Heart left ventricle (tissue), 16 donors: ENCODE measurements at regions of chr15 and their contacts with region 1.

Region 1: GRCh38 chr15:40893733-40894688 is at the start of gene VPS18:
- DNase-seq: peak; percentile 98 to 99 (median 99)
- ATAC-seq: peak; percentile 97 to 99 (median 98)
- H3K4me3 ChIP-seq: peak within 1 kb of the TSS; percentile 60 to 99 (median 78)
- H3K27ac ChIP-seq: peak within 1 kb of the TSS in 11 of 12 donors; percentile 82 to 96 (median 88)
- H3K4me1 ChIP-seq: peaks cover 0 to 24% (median 14%) of the 10 kb centered on the region in 12 donors
- H3K27me3 ChIP-seq: no peaks in the 10 kb centered on the region
- CTCF ChIP-seq: peak; percentile 96 to 99 (median 98)
- POLR2A ChIP-seq: peak in 1 of 2 donors; percentile 74
- total RNA-seq, gene VPS18: 18.0 to 29.2 (median 23.1) TPM

Region 2: DNA sequence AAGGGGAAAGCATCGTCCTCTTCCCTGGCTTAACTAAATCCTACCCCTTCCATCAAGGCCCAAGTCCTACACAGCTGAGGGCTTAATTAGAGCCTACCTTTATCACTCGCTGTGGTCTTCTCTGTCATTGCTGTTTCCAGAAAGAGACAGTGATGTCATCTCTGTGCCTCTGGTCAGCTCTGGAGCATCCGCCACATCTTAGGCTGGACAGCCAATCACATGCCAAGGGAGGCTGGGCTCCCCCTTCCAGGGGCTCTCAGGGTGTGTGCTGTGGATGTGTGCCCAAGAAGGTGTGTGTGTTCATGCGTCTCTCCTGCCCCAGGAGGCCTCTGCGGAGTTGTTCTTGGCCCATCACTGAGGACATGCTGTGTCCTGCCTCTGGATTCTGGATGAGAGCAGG is 380.4 kb before region 1 on chr15:
- intact Hi-C with region 1: loop called in 2 of 10 experiments (anchors 5 kb)
- DNase-seq: no peak
- ATAC-seq: no peak
- H3K4me3 ChIP-seq: no peak overlapping the region
- H3K27ac ChIP-seq: no peak overlapping the region
- H3K4me1 ChIP-seq: peaks cover 0 to 16% (median 10%) of the 10 kb centered on the region in 12 donors
- H3K27me3 ChIP-seq: peaks cover 0 to 27% (median 0%) of the 10 kb centered on the region in 9 donors
- CTCF ChIP-seq: no peak
- POLR2A ChIP-seq: no peak

Region 3: GRCh38 chr15:40536501-40536900 is 357.5 kb before region 1 on chr15:
- intact Hi-C with region 1: no loop called
- DNase-seq: no peak
- ATAC-seq: peak in 3 of 4 donors; percentile 5 to 41 (median 21)
- H3K4me3 ChIP-seq: no peak overlapping the region
- H3K27ac ChIP-seq: peak overlapping the region in 6 of 12 donors; percentile 37 to 79 (median 54)
- H3K4me1 ChIP-seq: peaks cover 0 to 21% (median 2%) of the 10 kb centered on the region in 12 donors
- H3K27me3 ChIP-seq: no peaks in the 10 kb centered on the region
- CTCF ChIP-seq: no peak
- POLR2A ChIP-seq: no peak

Region 4: DNA sequence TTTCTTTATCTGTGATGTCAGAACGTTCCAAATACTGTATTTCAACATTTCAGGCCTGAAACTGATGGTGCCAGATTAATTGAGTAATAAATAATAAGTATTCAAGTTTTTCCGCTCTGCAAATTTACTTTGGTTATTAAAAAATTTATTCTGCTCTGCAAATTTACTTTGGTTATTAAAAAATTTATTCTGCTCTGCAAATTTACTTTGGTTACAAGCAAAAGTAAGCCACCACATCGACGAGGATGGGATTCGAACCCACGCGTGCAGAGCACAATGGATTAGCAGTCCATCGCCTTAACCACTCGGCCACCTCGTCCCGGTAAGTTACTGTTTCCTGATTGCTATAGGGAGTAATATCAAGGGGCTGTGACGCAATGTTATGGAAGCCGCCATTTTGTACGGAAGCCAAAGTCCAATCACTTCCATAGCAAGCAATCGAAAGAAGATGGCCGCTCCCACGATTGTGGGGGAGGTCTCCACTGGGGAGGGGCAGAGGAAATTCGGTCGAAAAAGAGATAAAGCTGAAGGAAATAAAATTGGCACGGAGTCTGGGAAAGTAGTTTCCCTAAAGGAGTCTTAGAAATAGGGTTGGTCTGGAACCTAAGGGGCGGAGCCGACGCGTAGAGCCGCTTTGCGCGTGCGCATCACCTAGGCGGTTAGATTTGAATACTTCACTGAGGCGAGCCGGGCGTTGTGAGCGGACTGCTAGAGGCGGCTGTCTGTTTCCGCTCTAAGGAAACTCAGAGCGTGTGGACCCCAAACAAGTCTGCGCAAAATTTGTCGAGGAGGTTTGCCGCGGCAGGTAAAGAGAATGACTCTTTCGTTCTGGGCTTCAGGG is 300.2 kb before region 1 on chr15 and contains the start of gene KNL1:
- intact Hi-C with region 1: loop called in 9 of 10 experiments (anchors 5 to 10 kb)
- DNase-seq: peak; percentile 83 to 94 (median 90)
- ATAC-seq: peak; percentile 95 to 97 (median 96)
- H3K4me3 ChIP-seq: peak within 1 kb of the TSS; percentile 51 to 80 (median 60)
- H3K27ac ChIP-seq: peak within 1 kb of the TSS; percentile 83 to 98 (median 88)
- H3K4me1 ChIP-seq: peaks cover 0 to 24% (median 7%) of the 10 kb centered on the region in 12 donors
- H3K27me3 ChIP-seq: no peaks in the 10 kb centered on the region
- CTCF ChIP-seq: peak in 1 of 12 donors; percentile 0
- POLR2A ChIP-seq: no peak
- total RNA-seq, gene KNL1: 0.11 to 5.9 (median 1.0) TPM in 8 of 9 donors, not detected in the other

Region 5: DNA sequence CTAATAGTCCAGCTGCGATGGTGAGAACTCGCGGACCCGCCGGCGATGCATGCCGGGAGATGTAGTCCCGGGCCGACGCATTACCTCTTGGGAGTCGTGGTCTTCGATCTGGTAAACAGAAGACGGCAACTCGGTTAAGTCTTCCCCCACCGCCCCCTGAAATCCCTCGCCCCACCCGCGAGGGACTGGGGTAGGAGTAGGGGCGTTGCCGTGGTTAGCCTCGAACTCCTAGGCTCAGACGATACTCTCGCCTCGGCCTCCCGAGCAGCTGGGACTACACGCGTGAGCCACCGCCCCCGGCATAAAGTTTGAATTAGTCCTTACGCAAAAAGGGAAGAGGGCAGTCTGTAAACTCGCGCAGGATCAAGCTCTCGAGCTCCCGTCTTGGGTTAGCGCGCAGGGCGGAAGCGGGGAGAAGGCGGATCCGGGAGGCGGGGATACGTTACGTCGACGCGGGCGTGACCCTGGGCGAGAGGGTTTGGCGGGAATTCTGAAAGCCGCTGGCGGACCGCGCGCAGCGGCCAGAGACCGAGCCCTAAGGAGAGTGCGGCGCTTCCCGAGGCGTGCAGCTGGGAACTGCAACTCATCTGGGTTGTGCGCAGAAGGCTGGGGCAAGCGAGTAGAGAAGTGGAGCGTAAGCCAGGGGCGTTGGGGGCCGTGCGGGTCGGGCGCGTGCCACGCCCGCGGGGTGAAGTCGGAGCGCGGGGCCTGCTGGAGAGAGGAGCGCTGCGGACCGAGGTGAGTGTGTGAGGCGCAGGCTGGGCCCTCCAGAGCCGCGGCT is 199.1 kb before region 1 on chr15 and contains the start of gene RAD51:
- intact Hi-C with region 1: loop called in 4 of 10 experiments (anchors 5 to 10 kb)
- DNase-seq: peak; percentile 93 to 95 (median 95)
- ATAC-seq: peak; percentile 97 to 99 (median 99)
- H3K4me3 ChIP-seq: peak within 1 kb of the TSS; percentile 63 to 96 (median 84)
- H3K27ac ChIP-seq: peak within 1 kb of the TSS; percentile 93 to 100 (median 99)
- H3K4me1 ChIP-seq: peaks cover 0 to 21% (median 14%) of the 10 kb centered on the region in 12 donors
- H3K27me3 ChIP-seq: no peaks in the 10 kb centered on the region
- CTCF ChIP-seq: no peak
- POLR2A ChIP-seq: peak in 1 of 2 donors; percentile 74
- total RNA-seq, gene RAD51: 0.48 to 3.9 (median 0.65) TPM in 7 of 9 donors, not detected in the others

Region 6: GRCh38 chr15:40763801-40764732 is 129.9 kb before region 1 on chr15 and contains the start of gene GCHFR:
- intact Hi-C with region 1: loop called in 3 of 10 experiments (anchors 5 to 10 kb)
- DNase-seq: peak; percentile 70 to 87 (median 74)
- ATAC-seq: peak; percentile 26 to 78 (median 74)
- H3K4me3 ChIP-seq: peak within 1 kb of the TSS; percentile 33 to 75 (median 58)
- H3K27ac ChIP-seq: peak within 1 kb of the TSS in 11 of 12 donors; percentile 47 to 80 (median 62)
- H3K4me1 ChIP-seq: peaks cover 0 to 46% (median 23%) of the 10 kb centered on the region in 12 donors
- H3K27me3 ChIP-seq: no peaks in the 10 kb centered on the region
- CTCF ChIP-seq: peak in 10 of 12 donors; percentile 8 to 55 (median 35)
- POLR2A ChIP-seq: peak in 1 of 2 donors; percentile 59
- total RNA-seq, gene GCHFR: 1.6 to 24.0 (median 6.6) TPM

Region 7: DNA sequence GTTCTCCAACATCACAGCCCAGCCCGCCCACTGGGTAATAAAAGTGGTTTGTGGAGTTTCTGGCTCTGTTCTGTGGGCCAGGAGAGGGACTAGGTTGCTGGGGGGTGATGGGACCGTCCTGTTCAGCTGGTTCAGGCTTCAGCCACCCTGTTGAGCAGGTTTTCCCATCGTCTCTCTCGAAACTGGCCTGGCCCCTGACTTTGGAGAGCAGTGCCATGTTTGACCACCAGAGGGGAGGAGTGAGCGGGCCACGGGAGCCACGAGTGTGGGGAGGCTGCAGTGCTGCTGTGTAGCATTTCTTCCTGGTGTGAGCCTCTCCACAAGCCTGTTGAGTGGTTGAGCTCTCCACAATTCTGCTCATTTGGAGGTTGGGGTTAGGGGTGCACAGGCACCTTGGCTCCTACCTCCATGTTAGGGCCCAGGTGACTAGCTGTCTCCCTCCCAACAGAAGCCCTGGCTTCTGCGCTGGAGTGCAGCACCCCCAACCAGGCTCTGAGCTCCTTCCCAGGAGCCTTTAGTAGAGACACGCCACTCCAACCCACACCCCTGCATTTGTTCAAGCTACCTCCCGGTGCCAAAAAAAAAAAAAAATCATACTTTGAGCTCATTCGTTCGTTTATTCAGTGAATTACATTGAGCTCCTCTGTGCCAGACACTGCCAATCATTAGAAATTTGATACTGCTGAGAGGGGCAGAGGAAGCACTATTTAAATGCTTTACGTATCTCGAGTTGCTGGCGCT is 36.2 kb before region 1 on chr15:
- intact Hi-C with region 1: loop called (anchors 2 to 5 kb)
- DNase-seq: peak; percentile 53 to 87 (median 63)
- ATAC-seq: peak; percentile 60 to 90 (median 82)
- H3K4me3 ChIP-seq: no peak overlapping the region
- H3K27ac ChIP-seq: no peak overlapping the region
- H3K4me1 ChIP-seq: peaks cover 0 to 11% (median 0%) of the 10 kb centered on the region in 12 donors
- H3K27me3 ChIP-seq: peaks cover 0 to 20% (median 0%) of the 10 kb centered on the region in 9 donors
- CTCF ChIP-seq: peak; percentile 89 to 95 (median 92)
- POLR2A ChIP-seq: no peak